ENCODE measurements at regions of chr10 and their contacts with region 1.

Region 1: DNA sequence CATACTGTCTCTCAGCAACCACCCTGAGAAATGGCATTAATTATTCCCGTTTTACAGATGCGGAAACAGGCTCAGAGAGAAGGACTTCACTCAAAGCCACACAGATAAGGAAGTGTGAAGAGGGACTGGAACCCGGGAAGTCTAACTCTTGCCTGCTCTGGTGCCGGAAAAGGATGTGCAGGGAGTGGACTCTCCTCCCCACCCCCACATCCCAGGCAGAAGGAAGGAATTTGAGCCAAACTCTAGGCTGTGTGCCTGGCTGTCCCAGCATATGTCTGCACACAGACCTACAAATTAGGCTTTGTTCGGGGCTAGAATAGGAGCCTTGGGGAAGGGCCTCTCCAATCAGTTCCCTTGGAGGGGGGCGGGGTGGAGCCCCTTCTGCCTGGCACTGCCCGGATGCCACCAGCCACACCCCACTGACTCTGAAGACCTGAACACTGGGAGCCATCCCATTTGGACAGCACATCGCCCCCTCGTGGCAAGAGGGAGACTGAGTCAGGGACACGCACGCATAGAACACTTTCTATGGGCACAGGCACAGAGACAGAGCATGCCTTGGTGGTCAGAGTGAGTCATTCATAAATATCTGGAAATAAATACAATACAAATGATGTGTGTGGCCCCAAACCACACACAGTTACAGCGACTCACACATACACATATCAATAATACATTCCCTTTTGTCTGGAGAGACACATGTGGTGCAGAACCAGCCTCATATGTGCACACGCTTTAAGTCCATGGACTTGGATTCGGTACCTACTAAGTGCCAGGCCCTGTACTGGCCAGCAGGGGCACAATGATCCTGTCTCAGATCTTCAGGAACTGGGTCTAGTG is 13.1 kb downstream of the LZTS2 start:
- H3K4me3 ChIP-seq: no peak overlapping the region
- H3K27ac ChIP-seq: no peak overlapping the region
- H3K4me1 ChIP-seq: peaks cover 4% of the 10 kb centered on the region; the same call in 1 of the 2 replicates
- CTCF ChIP-seq: peak; percentile 98

Region 2: GRCh38 chr10:100969187-100970075 is 43.3 kb before region 1 on chr10 and contains the start of gene SEMA4G:
- CTCF ChIA-PET with region 1: interaction called, 21 read pairs
- POLR2A ChIA-PET with region 1: no interaction called
- H3K4me3 ChIP-seq: peak within 1 kb of the TSS; percentile 53
- H3K27ac ChIP-seq: no peak within 1 kb of the TSS; the same call in 1 of the 2 replicates
- H3K4me1 ChIP-seq: no peaks in the 10 kb centered on the region
- CTCF ChIP-seq: peak; percentile 84

Region 3: GRCh38 chr10:100993986-100994708 is 18.6 kb before region 1 on chr10:
- CTCF ChIA-PET with region 1: interaction called, 274 read pairs
- POLR2A ChIA-PET with region 1: interaction called, 14 read pairs
- H3K4me3 ChIP-seq: no peak overlapping the region
- H3K27ac ChIP-seq: no peak overlapping the region
- H3K4me1 ChIP-seq: peaks cover 6% of the 10 kb centered on the region
- CTCF ChIP-seq: peak; percentile 43; the same call in 1 of the 2 replicates

Region 4: DNA sequence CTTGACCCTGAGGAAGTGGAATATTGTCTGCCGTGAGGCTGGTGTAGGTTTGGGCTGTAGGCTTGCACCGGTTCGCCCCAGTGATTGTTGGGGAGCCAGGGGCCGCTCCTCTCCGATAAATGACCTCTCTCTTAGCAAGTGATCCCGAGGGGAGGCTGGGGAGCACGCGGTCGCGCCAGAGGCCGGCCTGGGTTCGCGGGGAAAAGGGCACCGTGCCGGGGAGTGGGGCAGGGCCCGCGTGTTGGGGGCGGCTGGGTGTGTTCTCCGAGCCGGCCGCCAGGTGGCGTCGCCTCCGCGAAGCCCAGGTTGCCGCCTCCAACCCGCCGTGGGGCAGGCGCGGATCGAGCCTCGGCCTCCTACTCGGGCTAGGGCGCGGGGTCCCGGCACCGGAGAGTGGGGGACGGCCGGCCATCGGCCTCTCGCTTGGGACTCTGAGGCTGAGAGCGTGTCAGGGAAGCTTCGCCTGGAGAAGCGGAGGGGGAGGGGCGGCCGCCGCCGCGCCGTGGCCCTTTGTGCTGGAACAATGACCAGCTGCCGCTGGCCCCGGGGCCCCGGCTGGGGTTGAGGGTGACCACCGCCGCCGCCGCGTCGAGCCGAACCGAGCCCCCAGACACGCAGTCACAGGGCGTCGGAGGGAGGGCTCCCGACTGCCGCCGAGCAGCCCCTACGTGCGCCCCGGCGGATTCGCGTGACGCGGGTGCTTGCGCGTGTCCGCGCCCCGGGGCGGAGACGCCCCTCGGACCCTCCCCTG is 13.6 kb before region 1 on chr10:
- CTCF ChIA-PET with region 1: interaction called, 274 read pairs
- POLR2A ChIA-PET with region 1: interaction called, 14 read pairs
- H3K4me3 ChIP-seq: peak overlapping the region; percentile 57
- H3K27ac ChIP-seq: peak overlapping the region; percentile 94
- H3K4me1 ChIP-seq: peaks cover 8% of the 10 kb centered on the region
- CTCF ChIP-seq: peak; percentile 93

Region 5: DNA sequence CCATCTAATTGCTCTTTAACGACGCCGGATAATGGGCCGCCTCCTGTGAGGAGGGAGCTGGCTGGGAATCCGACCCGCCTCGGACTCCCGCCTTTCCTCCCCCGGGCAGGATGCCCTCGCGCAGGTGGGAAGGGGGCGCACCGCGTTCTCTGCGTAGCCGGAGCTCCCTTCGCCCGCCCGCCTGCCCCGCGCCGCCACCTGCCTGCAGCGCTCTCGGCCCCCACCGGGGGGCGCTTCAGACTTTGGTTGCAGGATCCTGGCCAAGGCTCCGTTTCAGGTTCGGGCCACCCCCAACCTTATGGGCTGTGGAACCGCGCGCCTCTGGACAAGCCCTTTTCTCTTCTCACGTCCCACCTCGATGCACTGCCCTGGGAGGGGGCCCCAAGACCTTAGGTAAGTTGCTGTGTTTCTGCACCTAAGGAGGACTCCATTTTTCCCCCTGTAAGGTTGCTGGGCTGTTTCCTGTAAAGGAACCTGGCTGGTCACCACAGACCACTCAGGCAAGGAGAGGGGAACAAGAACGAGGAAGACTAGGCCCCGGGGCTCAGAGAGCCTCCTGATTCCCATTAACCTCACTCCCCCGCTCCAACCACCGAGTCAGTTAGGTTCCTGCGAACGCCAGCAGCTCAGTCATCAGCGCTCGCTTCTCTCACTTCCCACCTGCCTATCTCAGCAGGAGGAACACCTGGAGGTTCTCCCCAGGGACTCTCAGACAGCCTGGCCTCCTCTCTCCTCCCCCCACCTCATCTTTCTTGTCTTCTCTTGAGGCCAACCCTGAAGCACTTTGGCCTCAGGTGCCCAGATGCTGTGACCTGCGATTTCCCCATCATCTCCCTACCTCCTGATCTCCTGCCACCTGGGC is 37.7 kb after region 1 on chr10:
- CTCF ChIA-PET with region 1: interaction called, 10 read pairs
- POLR2A ChIA-PET with region 1: interaction called, 3 read pairs
- H3K4me3 ChIP-seq: no peak overlapping the region; the same call in 1 of the 2 replicates
- H3K27ac ChIP-seq: no peak overlapping the region
- H3K4me1 ChIP-seq: peaks cover 8% of the 10 kb centered on the region
- CTCF ChIP-seq: peak; percentile 94